ENCODE measurements at regions of chr14 and their contacts with region 1.

Region 1: GRCh38 chr14:56107615-56108014 is 10.6 kb upstream of the PELI2 start:
- DNase-seq: no peak
- ATAC-seq: no peak
- H3K4me3 Mint-ChIP-seq: no peak overlapping the region
- H3K27ac Mint-ChIP-seq: no peak overlapping the region
- H3K4me1 Mint-ChIP-seq: peaks cover 2% of the 10 kb centered on the region
- H3K27me3 Mint-ChIP-seq: no peaks in the 10 kb centered on the region
- CTCF ChIP-seq: no peak

Region 2: GRCh38 chr14:56117765-56118610 is 10.4 kb after region 1 on chr14 and contains the start of gene PELI2:
- CTCF ChIA-PET with region 1: interaction called, 13 read pairs
- POLR2A ChIA-PET with region 1: no interaction called
- intact Hi-C with region 1: no loop called
- DNase-seq: peak; percentile 72
- ATAC-seq: peak; percentile 81
- H3K4me3 Mint-ChIP-seq: peak within 1 kb of the TSS; percentile 86
- H3K27ac Mint-ChIP-seq: peak within 1 kb of the TSS; percentile 84
- H3K4me1 Mint-ChIP-seq: peaks cover 38% of the 10 kb centered on the region
- H3K27me3 Mint-ChIP-seq: peaks cover 15% of the 10 kb centered on the region
- CTCF ChIP-seq: no peak
- total RNA-seq, gene PELI2: 2.7 to 3.4 TPM

Measured in activated CD8-positive, alpha-beta T cell treated with anti-CD3 and anti-CD28 coated beads for 36 hours (primary cell).